MCF 10A (cell line): ENCODE measurements at regions of chr22 and their contacts with region 1.

Region 1: GRCh38 chr22:35582861-35583670 is 34.1 kb downstream of the MB start:
- DNase-seq: peak; percentile 61
- H3K4me3 Mint-ChIP-seq: no peak overlapping the region
- H3K27ac Mint-ChIP-seq: no peak overlapping the region
- H3K4me1 Mint-ChIP-seq: peaks cover 4% of the 10 kb centered on the region
- H3K27me3 Mint-ChIP-seq: no peaks in the 10 kb centered on the region
- CTCF ChIP-seq: peak; percentile 91

Region 2: GRCh38 chr22:35418088-35418487 is 165.0 kb before region 1 on chr22:
- CTCF ChIA-PET with region 1: interaction called, 22 read pairs
- POLR2A ChIA-PET with region 1: no interaction called
- intact Hi-C with region 1: no loop called
- DNase-seq: peak; percentile 68
- H3K4me3 Mint-ChIP-seq: no peak overlapping the region
- H3K27ac Mint-ChIP-seq: no peak overlapping the region
- H3K4me1 Mint-ChIP-seq: no peaks in the 10 kb centered on the region
- H3K27me3 Mint-ChIP-seq: no peaks in the 10 kb centered on the region
- CTCF ChIP-seq: no peak

Region 3: GRCh38 chr22:35430897-35431322 is 152.2 kb before region 1 on chr22:
- CTCF ChIA-PET with region 1: interaction called, 234 read pairs
- POLR2A ChIA-PET with region 1: no interaction called
- intact Hi-C with region 1: loop called (anchors 1 kb)
- DNase-seq: peak; percentile 84
- H3K4me3 Mint-ChIP-seq: no peak overlapping the region
- H3K27ac Mint-ChIP-seq: no peak overlapping the region
- H3K4me1 Mint-ChIP-seq: peaks cover 10% of the 10 kb centered on the region
- H3K27me3 Mint-ChIP-seq: no peaks in the 10 kb centered on the region
- CTCF ChIP-seq: peak; percentile 94

Region 4: DNA sequence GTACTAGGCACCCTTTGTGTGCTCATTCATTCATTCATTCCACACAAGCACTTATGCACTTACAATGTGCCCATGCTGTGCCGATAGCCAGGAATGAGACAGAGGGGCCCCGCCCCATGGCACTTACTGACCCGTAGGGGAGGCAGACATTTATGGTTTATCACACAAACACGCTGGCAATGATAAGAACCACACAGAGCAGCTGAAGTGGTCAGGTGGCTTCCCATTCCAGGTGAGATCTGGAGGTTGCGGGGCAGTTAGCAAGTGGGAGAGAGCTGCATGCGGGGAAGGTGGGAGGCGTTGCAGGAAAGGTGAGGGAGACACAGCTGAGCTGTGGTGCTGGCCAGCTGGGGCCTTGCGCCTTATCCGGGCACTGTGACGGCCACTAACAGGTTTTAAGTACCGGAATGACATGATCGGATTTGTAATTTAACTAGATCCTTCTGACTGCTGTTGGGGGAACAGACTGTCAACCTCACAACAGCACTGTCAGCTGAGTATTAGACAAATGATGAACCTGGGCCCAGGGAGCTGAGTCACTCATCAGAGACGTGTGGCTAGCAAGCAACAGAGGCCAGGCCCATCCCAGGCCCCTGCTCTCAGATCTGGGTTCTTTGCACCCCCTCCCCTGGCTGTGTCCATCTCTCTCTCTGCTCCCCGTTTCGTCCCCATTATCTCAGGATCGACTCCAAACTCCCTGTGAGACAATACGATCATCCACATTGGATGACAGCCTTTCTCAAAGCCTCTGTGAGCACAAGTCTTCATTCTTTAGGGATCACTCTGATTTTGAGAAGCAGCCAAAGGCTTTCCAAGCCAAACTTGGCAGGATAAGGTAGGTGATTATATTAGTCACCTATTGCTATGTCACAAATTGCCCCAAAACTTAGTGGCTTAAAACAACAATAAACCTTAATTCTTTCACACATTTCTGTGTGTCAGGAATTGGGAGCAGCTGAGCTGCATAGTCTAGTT is 14.0 kb before region 1 on chr22:
- CTCF ChIA-PET with region 1: interaction called, 35 read pairs
- POLR2A ChIA-PET with region 1: interaction called, 3 read pairs
- intact Hi-C with region 1: no loop called
- DNase-seq: peak; percentile 61
- H3K4me3 Mint-ChIP-seq: no peak overlapping the region
- H3K27ac Mint-ChIP-seq: peak overlapping the region; percentile 76
- H3K4me1 Mint-ChIP-seq: peaks cover 26% of the 10 kb centered on the region
- H3K27me3 Mint-ChIP-seq: no peaks in the 10 kb centered on the region
- CTCF ChIP-seq: no peak

Region 5: DNA sequence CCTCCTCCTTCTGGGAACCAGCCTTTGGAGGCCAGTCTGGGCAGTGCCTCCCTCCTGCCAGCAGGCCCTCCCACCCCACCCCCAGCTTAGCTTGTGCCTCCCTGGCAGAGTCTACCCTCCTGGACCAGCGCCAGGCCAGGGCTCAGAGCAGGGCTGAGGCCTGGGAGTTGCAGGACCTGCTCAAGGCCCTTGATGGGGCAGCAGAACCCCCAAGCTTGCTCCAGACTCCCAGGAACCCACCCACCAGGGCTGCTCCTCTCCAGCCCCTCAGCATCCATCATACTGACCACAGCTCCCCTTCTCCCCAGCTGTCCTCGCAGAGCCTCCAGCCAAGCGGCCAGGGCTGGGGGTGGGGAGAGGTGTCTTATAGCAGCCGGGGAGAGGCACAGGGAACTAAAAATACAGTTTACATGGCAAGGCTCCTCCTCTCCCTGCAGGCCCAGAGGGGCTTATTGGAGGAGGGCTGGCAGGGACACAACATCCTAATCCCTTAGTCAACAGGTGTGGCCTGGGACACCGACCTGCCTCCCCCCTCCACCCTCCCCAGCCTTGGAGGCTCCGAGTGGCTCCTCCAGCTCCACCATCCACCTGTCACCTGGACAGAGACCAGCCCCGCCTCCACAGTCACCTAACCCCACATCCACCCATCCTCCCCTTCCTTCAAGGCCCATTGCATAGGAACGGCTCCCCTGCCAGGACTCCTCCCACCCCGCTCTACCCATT is 39.3 kb after region 1 on chr22:
- CTCF ChIA-PET with region 1: interaction called, 12 read pairs
- POLR2A ChIA-PET with region 1: interaction called, 5 read pairs
- intact Hi-C with region 1: loop called (anchors 1 kb)
- DNase-seq: peak; percentile 46
- H3K4me3 Mint-ChIP-seq: no peak overlapping the region
- H3K27ac Mint-ChIP-seq: no peak overlapping the region
- H3K4me1 Mint-ChIP-seq: peaks cover 10% of the 10 kb centered on the region
- H3K27me3 Mint-ChIP-seq: no peaks in the 10 kb centered on the region
- CTCF ChIP-seq: no peak

Region 6: DNA sequence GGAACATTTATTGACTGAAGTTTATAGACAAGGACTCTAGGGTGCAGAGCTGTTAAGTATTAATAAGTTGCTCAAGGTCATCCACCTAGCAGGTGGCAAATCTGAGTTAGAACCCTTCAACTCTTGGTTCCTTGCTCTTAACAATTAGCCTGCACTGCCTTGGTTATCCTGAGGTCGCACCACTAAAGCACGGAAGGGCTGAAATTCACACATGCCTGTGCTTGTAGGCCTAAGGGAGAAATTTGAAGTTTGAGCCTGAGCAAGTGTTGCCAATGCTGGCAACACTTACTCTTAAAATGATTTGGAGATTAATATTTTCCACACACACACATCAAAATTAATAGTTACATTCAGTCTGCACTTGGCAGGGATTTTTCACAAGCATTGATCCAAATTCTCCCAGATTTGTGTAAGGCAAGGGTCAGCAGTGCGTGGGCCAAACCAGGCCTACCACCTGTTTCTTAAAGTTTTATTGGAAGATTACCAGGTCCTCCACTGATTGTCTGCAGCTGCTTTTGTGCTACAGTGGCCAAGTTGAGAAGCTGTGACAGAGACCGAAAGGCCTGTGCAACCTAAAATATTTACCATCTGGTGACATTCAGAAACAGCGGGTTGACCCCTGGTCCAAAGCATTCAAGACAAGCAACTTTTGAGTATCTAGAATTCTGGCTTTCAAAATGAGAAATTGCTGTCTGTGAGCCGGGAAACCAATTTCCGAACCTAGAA is 150.9 kb after region 1 on chr22:
- CTCF ChIA-PET with region 1: no interaction called
- POLR2A ChIA-PET with region 1: no interaction called
- intact Hi-C with region 1: no loop called
- DNase-seq: no peak
- H3K4me3 Mint-ChIP-seq: no peak overlapping the region
- H3K27ac Mint-ChIP-seq: no peak overlapping the region
- H3K4me1 Mint-ChIP-seq: no peaks in the 10 kb centered on the region
- H3K27me3 Mint-ChIP-seq: peaks cover 7% of the 10 kb centered on the region
- CTCF ChIP-seq: no peak

Region 7: GRCh38 chr22:35785181-35785923 is 202.3 kb after region 1 on chr22:
- CTCF ChIA-PET with region 1: no interaction called
- POLR2A ChIA-PET with region 1: no interaction called
- intact Hi-C with region 1: no loop called
- DNase-seq: peak; percentile 36
- H3K4me3 Mint-ChIP-seq: no peak overlapping the region
- H3K27ac Mint-ChIP-seq: peak overlapping the region; percentile 42
- H3K4me1 Mint-ChIP-seq: peaks cover 31% of the 10 kb centered on the region
- H3K27me3 Mint-ChIP-seq: no peaks in the 10 kb centered on the region
- CTCF ChIP-seq: no peak